ENCODE measurements at regions of chr3 and their contacts with region 1.

Region 1: DNA sequence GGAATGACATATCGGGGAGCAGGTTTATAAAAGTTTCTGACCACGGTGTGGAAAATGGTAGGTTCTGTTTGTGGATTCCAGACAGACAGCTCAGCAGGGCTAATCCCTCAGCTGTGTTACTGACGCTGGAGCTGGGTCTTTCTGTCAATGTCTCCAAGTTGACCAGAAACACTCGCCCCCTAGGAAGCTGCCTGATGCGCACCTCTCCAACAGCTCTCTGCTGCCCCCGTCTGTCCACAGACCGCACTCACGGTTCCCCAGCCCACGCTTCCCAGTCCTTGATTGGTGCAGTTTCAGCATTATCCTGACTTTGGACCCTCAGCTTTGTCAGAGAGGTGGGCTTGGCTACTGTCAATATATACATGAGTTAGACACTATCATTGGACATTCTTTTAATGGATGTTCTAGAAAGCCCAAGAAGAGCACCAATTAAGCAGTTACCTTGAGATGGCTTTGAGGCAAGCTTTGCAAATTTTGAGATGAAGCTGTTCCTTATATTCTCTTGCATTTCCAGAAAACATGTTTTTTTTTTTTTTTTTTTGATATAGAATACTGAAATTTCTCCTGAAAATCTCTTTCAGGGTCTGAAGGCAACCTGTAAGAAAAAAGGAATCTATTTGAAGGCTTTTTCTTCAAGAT is 98.9 kb upstream of the TBC1D5 start:
- DNase-seq: peak; percentile 91

Region 2: DNA sequence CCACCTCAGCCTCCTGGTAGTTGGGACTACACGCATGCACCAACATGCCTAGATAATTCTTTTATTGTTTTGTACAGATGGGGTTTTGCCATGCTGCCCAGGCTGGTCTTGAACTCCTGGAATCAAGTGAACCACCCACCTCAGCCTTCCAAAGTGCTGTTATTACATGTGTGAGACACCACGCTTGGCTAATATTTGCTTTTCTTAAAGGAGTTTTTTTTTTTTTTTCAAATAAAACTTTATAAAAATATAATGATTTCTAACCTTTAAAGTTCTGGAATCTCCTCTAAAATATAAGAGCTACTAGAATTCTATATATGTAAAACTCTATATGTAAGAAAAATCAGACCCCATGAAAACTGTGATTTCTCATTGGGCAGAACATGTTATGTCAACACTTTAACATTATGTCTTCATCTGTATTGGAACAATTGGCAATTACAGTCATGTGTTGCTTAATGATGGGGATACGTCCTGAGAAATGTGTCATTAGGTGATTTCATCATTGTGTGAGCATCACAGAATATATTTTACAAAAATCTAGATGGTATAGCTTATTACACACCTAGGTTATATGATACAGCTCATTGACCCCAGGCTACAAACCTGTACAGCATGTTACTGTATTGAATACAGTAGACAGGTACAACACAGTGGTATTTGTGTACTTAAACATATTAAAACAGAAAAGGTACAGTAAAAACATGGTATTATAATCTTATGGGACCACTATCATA is 579.5 kb before region 1 on chr3:
- intact Hi-C with region 1: loop called in 1 of 2 experiments (anchors 10 kb)
- DNase-seq: no peak

Region 3: GRCh38 chr3:17431004-17431403 is 410.3 kb before region 1 on chr3:
- intact Hi-C with region 1: loop called in 1 of 2 experiments (anchors 10 kb)
- DNase-seq: no peak

Region 4: DNA sequence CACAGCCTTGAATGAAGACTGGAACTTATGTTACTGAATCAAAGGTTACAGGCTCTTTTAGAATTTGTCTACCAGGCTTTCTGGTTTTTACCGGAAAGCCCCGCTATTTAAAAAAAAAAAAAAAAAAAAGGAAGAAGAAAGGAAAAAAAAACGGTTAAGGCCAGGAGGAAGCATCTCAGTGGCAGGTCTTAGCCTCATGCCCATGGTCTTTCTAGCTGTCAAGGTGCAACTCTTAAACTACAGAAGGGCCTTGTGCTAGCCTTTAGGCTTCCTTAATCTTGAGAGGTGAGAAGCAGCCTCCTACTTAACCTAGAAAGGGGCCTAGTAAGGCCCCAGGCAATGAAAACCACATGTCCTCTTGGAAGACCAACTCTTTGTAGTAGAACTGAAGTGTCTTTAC is 176.4 kb before region 1 on chr3:
- intact Hi-C with region 1: no loop called
- DNase-seq: no peak